Dorsolateral prefrontal cortex (tissue), 120 donors: ENCODE measurements at regions of chr12 and their contacts with region 1.

Region 1: DNA sequence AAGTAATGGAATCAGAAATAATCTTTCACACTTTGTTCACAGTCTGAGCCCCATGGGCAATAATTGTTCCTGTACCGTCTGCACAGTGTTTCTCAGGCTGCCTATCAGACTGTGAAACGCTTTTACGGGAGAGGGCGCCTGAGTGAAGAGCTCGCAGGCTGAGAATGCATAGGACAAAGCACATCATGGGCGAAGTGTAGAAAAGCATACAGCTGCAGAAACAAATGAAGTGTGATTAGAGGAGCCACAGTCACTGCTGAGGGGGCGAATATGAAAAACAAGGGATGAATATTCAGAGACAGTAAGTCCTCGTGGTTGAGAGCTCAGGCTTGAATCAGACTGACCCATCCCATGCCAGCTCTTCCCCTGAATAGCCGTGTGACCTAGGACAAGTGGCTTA is 438.4 kb upstream of the DCN start:
- DNase-seq: peak in 8 of 10 donors; percentile 32 to 70 (median 49)
- H3K4me3 ChIP-seq: peak overlapping the region in 1 of 59 donors; percentile 5
- H3K27ac ChIP-seq: peak overlapping the region in 5 of 59 donors; percentile 1 to 43 (median 21)
- H3K27me3 ChIP-seq: no peaks in the 10 kb centered on the region
- CTCF ChIP-seq: peak in 32 of 56 donors; percentile 4 to 54 (median 22)

Region 2: GRCh38 chr12:91811481-91812287 is 190.7 kb after region 1 on chr12:
- intact Hi-C with region 1: loop called in 1 of 2 experiments (anchors 10 kb)
- DNase-seq: peak; percentile 53 to 83 (median 66)
- H3K4me3 ChIP-seq: no peak overlapping the region
- H3K27ac ChIP-seq: peak overlapping the region in 1 of 59 donors; percentile 9
- H3K27me3 ChIP-seq: no peaks in the 10 kb centered on the region
- CTCF ChIP-seq: peak; percentile 71 to 91 (median 84)